BJ (cell line): ENCODE measurements at regions of chr2 and their contacts with region 1.

Region 1: DNA sequence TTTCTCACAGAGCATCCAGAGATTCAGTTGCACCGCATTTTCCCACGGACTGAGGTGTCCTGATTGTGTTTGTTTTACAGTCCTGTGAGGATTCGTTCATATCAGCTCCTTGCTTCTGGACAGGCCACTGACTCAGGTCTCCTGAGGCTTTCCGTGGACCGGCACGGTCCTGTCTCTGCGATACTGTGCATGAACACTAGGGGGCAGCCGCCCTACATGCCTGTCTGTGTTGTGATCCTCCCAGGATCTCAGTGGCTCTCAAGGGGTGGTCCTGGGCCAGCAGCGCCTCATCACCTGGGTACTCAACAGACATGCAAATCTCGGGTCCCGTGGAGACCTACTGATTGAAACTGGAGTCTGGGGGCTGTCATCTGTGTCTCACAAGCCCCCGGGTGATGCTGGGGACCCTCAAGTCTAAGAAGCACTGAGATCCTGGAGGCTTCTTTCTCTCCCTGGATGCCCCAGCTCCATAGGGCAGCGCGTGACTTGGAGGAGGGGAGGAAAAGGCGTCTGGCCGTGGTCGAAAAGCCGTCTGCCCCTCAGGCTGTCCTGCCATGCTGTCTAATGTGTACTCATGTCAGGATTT is 28.9 kb downstream of the IL1R2 start:
- DNase-seq: no peak
- H3K4me3 ChIP-seq: no peak overlapping the region
- H3K27me3 ChIP-seq: no peaks in the 10 kb centered on the region
- CTCF ChIP-seq: peak; percentile 99

Region 2: DNA sequence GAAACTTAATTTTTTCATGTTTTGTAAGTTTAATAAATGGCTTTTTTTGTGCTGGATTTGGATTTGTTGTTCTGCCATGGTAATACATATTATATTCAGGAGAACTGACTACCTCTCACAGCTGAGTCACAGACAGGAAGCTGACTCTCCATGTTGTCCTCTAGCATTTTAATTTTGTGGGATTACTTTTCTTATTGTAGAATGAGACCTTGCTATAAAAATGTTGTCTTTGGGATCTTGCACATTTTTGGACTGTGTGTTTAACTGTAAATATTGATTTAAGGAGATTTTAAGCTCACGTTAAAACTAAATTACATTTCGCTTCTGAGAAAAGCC is 274.3 kb before region 1 on chr2:
- CTCF ChIA-PET with region 1: no interaction called
- POLR2A ChIA-PET with region 1: no interaction called
- DNase-seq: peak; percentile 59
- H3K4me3 ChIP-seq: no peak overlapping the region
- H3K27me3 ChIP-seq: no peaks in the 10 kb centered on the region
- CTCF ChIP-seq: no peak

Region 3: DNA sequence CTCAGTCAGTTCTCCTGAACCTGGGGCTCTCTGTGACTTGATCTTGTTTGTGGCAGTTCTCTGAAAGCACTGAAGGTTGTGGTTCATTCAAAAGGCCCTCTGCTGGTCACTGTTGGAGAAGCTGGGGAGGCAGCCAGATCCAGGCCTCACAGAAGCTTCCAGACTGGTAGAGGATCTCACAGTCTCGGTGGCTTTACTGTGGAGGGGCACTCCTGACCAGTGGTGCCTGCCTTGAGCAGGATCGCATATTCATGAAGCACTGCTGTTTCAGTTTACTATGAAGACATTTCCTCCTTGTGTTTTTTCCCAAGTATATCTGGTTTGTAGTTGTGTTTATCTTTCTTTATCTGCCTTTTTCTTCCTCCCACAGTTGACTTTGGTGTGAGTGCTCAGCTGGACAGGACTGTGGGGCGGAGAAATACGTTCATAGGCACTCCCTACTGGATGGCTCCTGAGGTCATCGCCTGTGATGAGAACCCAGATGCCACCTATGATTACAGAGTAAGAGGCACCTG is 189.3 kb before region 1 on chr2:
- CTCF ChIA-PET with region 1: no interaction called
- POLR2A ChIA-PET with region 1: no interaction called
- DNase-seq: no peak
- H3K4me3 ChIP-seq: no peak overlapping the region
- H3K27me3 ChIP-seq: no peaks in the 10 kb centered on the region
- CTCF ChIP-seq: peak; percentile 81

Region 4: DNA sequence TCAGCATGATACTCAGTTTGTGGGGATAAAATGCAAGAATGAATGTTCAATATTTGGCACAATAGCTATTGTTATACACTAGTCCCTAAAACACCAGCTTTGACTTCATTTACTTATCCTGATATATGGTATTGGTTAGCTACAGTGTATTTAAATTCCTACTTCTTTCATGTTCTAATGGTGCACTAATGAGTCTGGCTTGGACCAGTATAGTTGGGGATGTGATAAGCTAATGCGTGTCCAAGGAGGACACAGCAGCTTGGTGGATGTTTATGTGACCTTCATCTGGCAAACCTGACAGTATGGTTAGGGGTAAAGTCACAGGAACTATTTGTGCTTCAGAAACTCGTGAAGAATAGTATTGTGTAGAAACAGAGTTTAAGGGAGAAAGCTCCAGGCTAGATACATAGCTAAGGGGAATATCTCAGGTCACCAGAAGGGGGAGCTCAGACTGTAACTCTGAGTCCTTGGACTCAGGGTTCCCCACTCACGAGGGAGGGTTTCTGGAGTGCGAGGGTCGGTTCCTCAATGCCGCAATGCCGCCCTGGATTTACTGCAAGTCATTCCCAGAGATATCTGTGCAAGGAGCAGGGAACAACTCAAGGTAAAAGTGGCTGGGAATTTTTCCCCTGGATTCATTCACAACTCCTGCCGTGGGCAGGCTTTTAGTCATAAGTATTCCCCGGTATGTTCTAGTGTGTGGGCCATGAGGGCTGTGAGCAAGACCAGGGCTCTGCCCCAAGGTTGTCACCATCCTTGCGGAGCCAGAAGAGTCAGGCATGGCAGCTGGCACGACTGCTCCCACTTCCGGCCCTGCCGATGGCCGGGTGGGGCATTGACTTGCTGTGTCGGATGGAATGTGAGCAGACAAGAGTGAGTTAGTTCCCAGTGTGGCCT is 14.5 kb before region 1 on chr2:
- CTCF ChIA-PET with region 1: interaction called, 33 read pairs
- POLR2A ChIA-PET with region 1: no interaction called
- DNase-seq: no peak
- H3K4me3 ChIP-seq: no peak overlapping the region
- H3K27me3 ChIP-seq: no peaks in the 10 kb centered on the region
- CTCF ChIP-seq: peak; percentile 79

Region 5: GRCh38 chr2:102033031-102033749 is 12.5 kb after region 1 on chr2:
- CTCF ChIA-PET with region 1: interaction called, 12 read pairs
- POLR2A ChIA-PET with region 1: no interaction called
- DNase-seq: no peak
- H3K4me3 ChIP-seq: no peak overlapping the region
- H3K27me3 ChIP-seq: no peaks in the 10 kb centered on the region
- CTCF ChIP-seq: no peak; the same call in 1 of the 2 replicates

Region 6: DNA sequence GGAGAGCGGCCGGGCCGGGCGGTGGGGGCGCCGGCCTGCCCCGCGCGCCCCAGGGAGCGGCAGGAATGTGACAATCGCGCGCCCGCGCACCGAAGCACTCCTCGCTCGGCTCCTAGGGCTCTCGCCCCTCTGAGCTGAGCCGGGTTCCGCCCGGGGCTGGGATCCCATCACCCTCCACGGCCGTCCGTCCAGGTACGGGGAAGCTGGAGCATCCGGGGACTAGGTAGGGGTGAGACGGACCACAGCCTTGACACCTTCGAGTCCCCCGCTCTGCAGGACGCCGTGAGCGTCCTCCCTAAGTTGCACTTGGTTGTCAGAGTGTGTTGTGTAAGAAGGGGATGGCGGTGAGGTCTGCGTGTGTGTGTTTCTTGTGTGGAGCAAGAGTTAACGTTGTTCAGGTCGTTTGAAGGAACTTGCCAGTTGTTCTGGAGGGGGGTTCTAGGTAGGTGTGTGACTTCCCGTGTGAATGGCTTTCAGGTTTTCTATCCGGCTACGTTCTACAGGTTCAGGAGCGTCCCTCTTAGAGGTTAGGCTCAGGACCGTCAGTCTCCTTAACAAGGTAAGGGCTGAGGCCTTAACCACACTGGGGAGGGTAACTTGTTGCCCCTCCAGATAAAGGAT is 122.2 kb after region 1 on chr2:
- CTCF ChIA-PET with region 1: interaction called, 16 read pairs
- POLR2A ChIA-PET with region 1: no interaction called
- DNase-seq: no peak
- H3K4me3 ChIP-seq: peak overlapping the region; percentile 61
- H3K27me3 ChIP-seq: no peaks in the 10 kb centered on the region
- CTCF ChIP-seq: no peak

Region 7: GRCh38 chr2:102155642-102156491 is 135.2 kb after region 1 on chr2:
- CTCF ChIA-PET with region 1: interaction called, 17 read pairs
- POLR2A ChIA-PET with region 1: no interaction called
- DNase-seq: no peak
- H3K4me3 ChIP-seq: no peak overlapping the region
- H3K27me3 ChIP-seq: no peaks in the 10 kb centered on the region
- CTCF ChIP-seq: no peak